Gastrocnemius medialis (tissue), 4 donors: ENCODE measurements at regions of chr19 and their contacts with region 1.

Region 1: GRCh38 chr19:46766569-46767317 is 20.5 kb upstream of the STRN4 start:
- DNase-seq: no peak
- ATAC-seq: peak in 1 of 2 donors; percentile 44
- H3K4me3 ChIP-seq: no peak overlapping the region
- H3K27ac ChIP-seq: no peak overlapping the region
- H3K4me1 ChIP-seq: no peaks in the 10 kb centered on the region
- H3K27me3 ChIP-seq: no peaks in the 10 kb centered on the region
- CTCF ChIP-seq: peak; percentile 24 to 67 (median 42)
- POLR2A ChIP-seq: no peak

Region 2: GRCh38 chr19:46821498-46822409 is 55.0 kb after region 1 on chr19:
- in situ Hi-C with region 1: loop called in 1 of 4 experiments (anchors 10 kb)
- intact Hi-C with region 1: no loop called
- DNase-seq: no peak
- ATAC-seq: no peak
- H3K4me3 ChIP-seq: no peak overlapping the region
- H3K27ac ChIP-seq: no peak overlapping the region
- H3K4me1 ChIP-seq: peaks cover 0 to 5% of the 10 kb centered on the region in 2 donors
- H3K27me3 ChIP-seq: no peaks in the 10 kb centered on the region
- CTCF ChIP-seq: no peak
- POLR2A ChIP-seq: no peak

Region 3: GRCh38 chr19:46840136-46840942 is 73.6 kb after region 1 on chr19:
- in situ Hi-C with region 1: loop called in 1 of 4 experiments (anchors 10 kb)
- intact Hi-C with region 1: no loop called
- DNase-seq: no peak
- ATAC-seq: peak in 1 of 2 donors; percentile 67
- H3K4me3 ChIP-seq: no peak overlapping the region
- H3K27ac ChIP-seq: peak overlapping the region in 1 of 4 donors; percentile 20
- H3K4me1 ChIP-seq: peaks cover 0 to 3% of the 10 kb centered on the region in 2 donors
- H3K27me3 ChIP-seq: no peaks in the 10 kb centered on the region
- CTCF ChIP-seq: peak; percentile 65 to 80 (median 78)
- POLR2A ChIP-seq: no peak